B cell (primary cell): ENCODE measurements at regions of chrX and their contacts with region 1.

Region 1: GRCh38 chrX:106481341-106481740 is 130.4 kb upstream of the RADX start:
- DNase-seq: peak; percentile 49
- ATAC-seq: no peak
- H3K4me3 ChIP-seq: no peak overlapping the region
- H3K4me3 Mint-ChIP-seq: no peak overlapping the region
- H3K27ac ChIP-seq: no peak overlapping the region
- H3K27ac Mint-ChIP-seq: no peak overlapping the region
- H3K4me1 ChIP-seq: peaks cover 0 to 8% of the 10 kb centered on the region in 2 donors
- H3K4me1 Mint-ChIP-seq: peaks cover 16% of the 10 kb centered on the region
- H3K27me3 ChIP-seq: no peaks in the 10 kb centered on the region
- H3K27me3 Mint-ChIP-seq: no peaks in the 10 kb centered on the region
- CTCF ChIP-seq: peak; percentile 76

Region 2: DNA sequence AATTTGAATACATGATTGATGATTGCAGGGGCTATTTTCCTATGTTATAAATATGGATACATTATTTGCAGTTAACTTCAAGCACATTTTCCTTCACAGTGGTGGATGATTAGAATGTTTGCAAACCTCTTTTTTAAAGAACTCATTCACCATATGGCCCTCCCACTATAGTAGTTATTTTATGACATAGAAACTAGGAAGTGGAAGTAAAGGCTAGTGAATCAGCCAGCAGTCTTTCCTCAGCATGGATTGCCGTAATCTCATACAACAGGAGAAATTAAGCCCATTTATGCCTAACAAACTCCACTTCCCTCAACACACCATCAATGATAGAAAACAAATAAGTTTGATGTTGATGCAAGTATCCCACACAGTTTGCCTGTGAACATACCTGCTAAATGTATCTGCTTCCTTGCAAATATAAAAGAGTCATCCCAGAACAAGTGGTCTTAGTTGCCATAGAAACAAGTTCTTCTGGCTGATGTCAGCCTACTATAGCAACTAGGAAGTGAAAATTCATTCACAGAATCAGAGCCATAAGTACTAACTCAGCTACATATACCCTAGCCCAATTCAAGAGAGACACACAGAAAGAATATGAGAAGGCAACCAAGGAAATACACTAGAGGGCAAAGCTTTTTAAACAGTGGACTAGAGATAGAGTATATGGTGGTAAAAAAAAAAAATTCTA is 29.5 kb after region 1 on chrX:
- CTCF ChIA-PET with region 1: no interaction called
- POLR2A ChIA-PET with region 1: no interaction called
- intact Hi-C with region 1: no loop called
- DNase-seq: no peak
- ATAC-seq: no peak
- H3K4me3 ChIP-seq: no peak overlapping the region
- H3K4me3 Mint-ChIP-seq: no peak overlapping the region
- H3K27ac ChIP-seq: no peak overlapping the region
- H3K27ac Mint-ChIP-seq: no peak overlapping the region
- H3K4me1 ChIP-seq: no peaks in the 10 kb centered on the region
- H3K4me1 Mint-ChIP-seq: no peaks in the 10 kb centered on the region
- H3K27me3 ChIP-seq: no peaks in the 10 kb centered on the region
- H3K27me3 Mint-ChIP-seq: no peaks in the 10 kb centered on the region
- CTCF ChIP-seq: no peak

Region 3: GRCh38 chrX:106619797-106620196 is 138.5 kb after region 1 on chrX:
- CTCF ChIA-PET with region 1: interaction called, 26 read pairs
- POLR2A ChIA-PET with region 1: no interaction called
- intact Hi-C with region 1: loop called (anchors 1 kb)
- DNase-seq: peak; percentile 7
- ATAC-seq: no peak
- H3K4me3 ChIP-seq: no peak overlapping the region
- H3K4me3 Mint-ChIP-seq: no peak overlapping the region
- H3K27ac ChIP-seq: no peak overlapping the region
- H3K27ac Mint-ChIP-seq: no peak overlapping the region
- H3K4me1 ChIP-seq: no peaks in the 10 kb centered on the region
- H3K4me1 Mint-ChIP-seq: no peaks in the 10 kb centered on the region
- H3K27me3 ChIP-seq: no peaks in the 10 kb centered on the region
- H3K27me3 Mint-ChIP-seq: no peaks in the 10 kb centered on the region
- CTCF ChIP-seq: peak; percentile 27

Region 4: GRCh38 chrX:106791495-106791894 is 310.2 kb after region 1 on chrX:
- CTCF ChIA-PET with region 1: interaction called, 15 read pairs
- POLR2A ChIA-PET with region 1: no interaction called
- intact Hi-C with region 1: no loop called
- DNase-seq: no peak
- ATAC-seq: no peak
- H3K4me3 ChIP-seq: no peak overlapping the region
- H3K4me3 Mint-ChIP-seq: no peak overlapping the region
- H3K27ac ChIP-seq: no peak overlapping the region
- H3K27ac Mint-ChIP-seq: no peak overlapping the region
- H3K4me1 ChIP-seq: no peaks in the 10 kb centered on the region
- H3K4me1 Mint-ChIP-seq: no peaks in the 10 kb centered on the region
- H3K27me3 ChIP-seq: no peaks in the 10 kb centered on the region
- H3K27me3 Mint-ChIP-seq: no peaks in the 10 kb centered on the region
- CTCF ChIP-seq: peak; percentile 31